Sigmoid colon (tissue), 7 donors: ENCODE measurements at regions of chr5 and their contacts with region 1.

Region 1: GRCh38 chr5:151126199-151126645 is 31.4 kb downstream of the ANXA6 start:
- DNase-seq: peak; percentile 86
- H3K4me3 ChIP-seq: no peak overlapping the region
- H3K27ac ChIP-seq: peak overlapping the region in 1 of 4 donors; percentile 67
- H3K4me1 ChIP-seq: peaks cover 0 to 21% (median 14%) of the 10 kb centered on the region in 4 donors
- H3K27me3 ChIP-seq: no peaks in the 10 kb centered on the region
- CTCF ChIP-seq: peak; percentile 75 to 93 (median 83)
- EP300 ChIP-seq: no peak
- POLR2A ChIP-seq: no peak

Region 2: GRCh38 chr5:151164686-151165392 is 38.6 kb after region 1 on chr5:
- intact Hi-C with region 1: loop called (anchors 1 kb)
- DNase-seq: peak; percentile 91
- H3K4me3 ChIP-seq: no peak overlapping the region
- H3K27ac ChIP-seq: peak overlapping the region in 1 of 4 donors; percentile 33
- H3K4me1 ChIP-seq: peaks cover 0 to 28% (median 16%) of the 10 kb centered on the region in 4 donors
- H3K27me3 ChIP-seq: no peaks in the 10 kb centered on the region
- CTCF ChIP-seq: peak; percentile 82 to 87 (median 86)
- EP300 ChIP-seq: no peak
- POLR2A ChIP-seq: no peak

Region 3: GRCh38 chr5:151315998-151316597 is 189.9 kb after region 1 on chr5:
- intact Hi-C with region 1: loop called (anchors 10 kb)
- DNase-seq: peak; percentile 80
- H3K4me3 ChIP-seq: no peak overlapping the region
- H3K27ac ChIP-seq: no peak overlapping the region
- H3K4me1 ChIP-seq: peaks cover 0 to 12% (median 11%) of the 10 kb centered on the region in 4 donors
- H3K27me3 ChIP-seq: no peaks in the 10 kb centered on the region
- CTCF ChIP-seq: peak; percentile 31 to 83 (median 68)
- EP300 ChIP-seq: no peak
- POLR2A ChIP-seq: no peak

Region 4: DNA sequence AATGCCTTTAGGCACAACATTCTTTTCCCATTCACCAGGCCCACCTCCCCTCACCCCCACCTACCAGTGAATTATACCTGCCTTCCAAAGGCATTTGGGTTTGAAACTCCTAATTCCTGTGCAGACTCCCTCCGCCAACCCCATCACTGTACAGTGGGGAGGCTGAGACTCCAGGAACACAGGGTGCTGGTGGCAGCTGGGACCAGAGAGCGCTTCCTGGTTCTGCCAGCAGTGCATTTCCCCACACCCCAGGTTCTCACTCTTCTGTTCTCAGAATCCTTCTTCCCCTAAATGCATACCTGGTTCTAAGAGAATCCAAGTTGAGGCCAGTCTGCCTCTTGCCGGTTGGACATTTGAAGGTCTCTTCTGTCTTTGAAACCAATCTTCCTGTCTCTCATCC is 200.0 kb after region 1 on chr5:
- intact Hi-C with region 1: no loop called
- DNase-seq: no peak
- H3K4me3 ChIP-seq: no peak overlapping the region
- H3K27ac ChIP-seq: no peak overlapping the region
- H3K4me1 ChIP-seq: no peaks in the 10 kb centered on the region
- H3K27me3 ChIP-seq: no peaks in the 10 kb centered on the region
- CTCF ChIP-seq: no peak
- EP300 ChIP-seq: no peak
- POLR2A ChIP-seq: no peak

Region 5: GRCh38 chr5:151357801-151358200 is 231.6 kb after region 1 on chr5:
- intact Hi-C with region 1: no loop called
- DNase-seq: no peak
- H3K4me3 ChIP-seq: no peak overlapping the region
- H3K27ac ChIP-seq: no peak overlapping the region
- H3K4me1 ChIP-seq: no peaks in the 10 kb centered on the region
- H3K27me3 ChIP-seq: no peaks in the 10 kb centered on the region
- CTCF ChIP-seq: no peak
- EP300 ChIP-seq: no peak
- POLR2A ChIP-seq: no peak

Region 6: DNA sequence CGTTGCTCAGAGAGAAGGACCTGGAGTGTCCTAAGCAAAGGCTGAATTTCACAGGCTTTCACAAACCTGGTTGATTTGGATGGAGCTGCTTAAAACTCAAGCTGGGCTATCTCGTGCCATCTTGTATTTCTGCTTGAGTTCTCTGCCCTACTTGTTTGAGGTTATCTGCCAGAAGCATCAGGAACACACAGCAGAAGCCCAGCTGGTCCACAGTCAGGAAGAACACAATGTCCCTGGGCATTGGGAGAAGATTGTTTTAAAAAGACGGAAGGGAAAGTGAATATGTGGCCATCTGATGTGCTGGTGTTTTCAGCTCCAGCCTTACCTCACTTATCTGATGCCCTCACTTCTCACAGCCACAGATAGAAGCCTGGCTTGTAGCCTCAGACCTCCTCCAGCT is 288.3 kb after region 1 on chr5:
- intact Hi-C with region 1: no loop called
- DNase-seq: no peak
- H3K4me3 ChIP-seq: no peak overlapping the region
- H3K27ac ChIP-seq: no peak overlapping the region
- H3K4me1 ChIP-seq: no peaks in the 10 kb centered on the region
- H3K27me3 ChIP-seq: peaks cover 0 to 3% (median 0%) of the 10 kb centered on the region in 3 donors
- CTCF ChIP-seq: no peak
- EP300 ChIP-seq: no peak
- POLR2A ChIP-seq: no peak